ENCODE measurements at regions of chr19 and their contacts with region 1.

Region 1: DNA sequence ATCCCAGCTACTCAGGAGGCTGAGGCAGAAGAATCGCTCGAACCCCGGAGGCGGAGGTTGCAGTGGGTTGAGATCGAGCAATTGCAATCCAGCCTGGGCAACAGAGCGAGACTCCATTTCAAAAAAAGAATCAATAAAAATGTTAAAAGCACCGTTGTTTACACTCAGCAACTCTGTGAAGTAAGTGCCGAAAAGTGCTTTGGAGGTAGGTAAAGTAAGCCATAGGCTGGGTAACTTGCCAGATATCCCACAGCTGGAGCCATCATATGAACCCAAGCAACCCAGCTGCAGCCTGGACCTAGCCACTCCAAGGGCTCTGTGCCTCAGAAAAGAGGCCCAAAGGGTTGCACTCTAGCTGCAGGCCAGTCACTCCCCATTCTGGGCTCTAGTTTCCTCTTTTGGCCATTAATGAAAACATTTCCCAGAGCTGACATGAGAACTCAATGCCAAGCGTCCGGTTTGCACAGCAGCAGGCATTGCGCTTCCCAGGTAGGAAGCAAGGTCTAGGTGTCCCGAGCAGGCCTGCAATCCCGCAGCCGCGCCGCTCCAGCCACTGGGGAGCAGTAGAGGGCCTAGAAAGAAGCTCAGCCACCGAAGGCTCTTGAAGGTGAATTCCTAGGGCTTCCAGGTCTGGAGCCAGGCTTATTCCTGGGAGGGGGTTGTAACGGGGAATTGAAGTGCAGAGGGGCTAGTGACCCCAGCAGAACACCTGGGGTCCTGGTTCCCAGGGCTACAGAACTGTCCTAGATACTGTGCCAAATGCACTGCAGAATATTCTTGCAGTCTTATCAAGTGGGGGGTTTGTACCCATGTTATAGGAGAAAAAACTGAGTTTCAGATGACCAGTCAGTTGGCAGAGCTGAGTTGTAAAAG is 4.1 kb upstream of the CD79A start:
- DNase-seq: no peak
- H3K4me3 ChIP-seq: no peak overlapping the region
- H3K27ac ChIP-seq: no peak overlapping the region
- H3K4me1 ChIP-seq: peaks cover 0 to 17% (median 10%) of the 10 kb centered on the region in 4 donors
- H3K27me3 ChIP-seq: no peaks in the 10 kb centered on the region
- CTCF ChIP-seq: peak; percentile 34 to 61 (median 44)
- EP300 ChIP-seq: no peak
- POLR2A ChIP-seq: no peak

Region 2: DNA sequence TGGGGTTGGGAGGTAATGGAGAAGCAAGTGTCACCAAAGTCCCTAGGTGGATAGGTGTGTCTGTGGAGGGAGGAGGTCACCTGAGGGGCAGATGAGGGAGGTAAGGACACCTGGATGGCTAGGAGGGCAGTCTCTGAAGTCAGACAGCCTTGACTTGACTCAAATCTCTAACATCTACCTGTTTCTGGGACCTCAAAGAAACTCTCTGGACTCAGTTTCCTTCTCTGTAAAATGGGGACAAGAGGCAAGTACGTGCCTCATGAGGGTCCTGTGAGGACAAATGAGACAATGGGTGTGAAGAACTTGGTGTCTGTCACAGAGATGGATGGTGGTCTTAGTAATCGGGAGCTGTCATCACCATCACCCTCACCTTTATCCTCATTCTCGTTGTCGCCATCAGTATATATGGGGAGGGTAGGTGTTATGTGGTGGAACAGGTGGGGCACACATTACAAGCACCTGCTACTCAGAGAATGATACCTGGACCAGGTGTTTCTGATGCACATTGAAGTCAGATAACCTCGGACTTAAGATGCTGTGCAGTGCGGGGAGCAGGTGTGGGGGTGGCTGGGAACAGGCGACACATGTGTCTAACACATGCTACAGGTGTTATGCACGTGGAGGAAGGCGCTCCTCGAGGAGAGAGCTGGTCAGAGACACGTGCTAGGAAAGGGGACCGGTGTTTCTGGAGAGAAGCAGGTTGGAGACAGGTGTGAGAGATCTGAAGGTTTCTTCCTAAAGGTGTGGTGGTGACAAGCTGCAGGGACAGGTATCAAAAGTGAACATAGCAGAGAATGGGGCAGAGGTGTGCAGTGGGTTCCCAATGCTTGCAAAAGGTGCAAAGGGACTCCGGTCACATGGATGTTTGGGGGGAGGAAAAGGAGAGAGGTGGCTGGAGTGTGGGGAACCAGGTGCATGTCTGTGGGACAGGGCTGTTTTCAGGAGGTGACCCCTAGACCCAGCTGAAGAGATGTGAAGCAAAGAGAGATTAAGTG is 51.4 kb after region 1 on chr19:
- intact Hi-C with region 1: no loop called
- DNase-seq: no peak
- H3K4me3 ChIP-seq: no peak overlapping the region
- H3K27ac ChIP-seq: no peak overlapping the region
- H3K4me1 ChIP-seq: peaks cover 17 to 21% (median 20%) of the 10 kb centered on the region in 4 donors
- H3K27me3 ChIP-seq: peaks cover 5 to 100% (median 75%) of the 10 kb centered on the region in 4 donors
- CTCF ChIP-seq: no peak
- EP300 ChIP-seq: no peak
- POLR2A ChIP-seq: no peak

Region 3: DNA sequence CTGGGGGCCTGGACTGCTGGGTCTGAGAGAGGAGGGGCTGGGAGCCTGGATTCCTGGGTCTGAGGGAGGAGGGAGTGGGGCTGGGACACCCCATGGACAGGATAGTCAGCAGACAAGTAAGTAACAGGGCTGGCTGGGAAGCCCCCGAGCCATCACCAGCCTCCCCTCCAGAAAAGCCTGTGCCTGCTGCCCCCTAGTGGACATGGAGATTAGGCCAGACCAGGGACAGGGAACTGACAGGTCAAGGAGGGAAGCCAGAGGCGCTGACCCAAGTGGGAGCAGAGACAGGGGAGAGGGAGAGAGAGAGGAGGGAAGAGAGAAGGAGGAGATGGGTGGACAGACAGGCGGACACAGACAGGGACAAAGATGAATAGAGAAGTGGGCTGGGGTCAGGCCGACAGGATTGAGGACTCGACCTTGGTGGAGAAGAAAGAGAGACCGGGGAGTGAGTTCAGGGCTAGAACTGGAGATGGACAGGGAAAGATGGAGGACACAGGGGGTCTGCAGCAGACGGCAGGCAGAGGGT is 61.9 kb after region 1 on chr19:
- intact Hi-C with region 1: loop called (anchors 5 kb)
- DNase-seq: no peak
- H3K4me3 ChIP-seq: no peak overlapping the region
- H3K27ac ChIP-seq: no peak overlapping the region
- H3K4me1 ChIP-seq: peaks cover 3 to 32% (median 27%) of the 10 kb centered on the region in 4 donors
- H3K27me3 ChIP-seq: peaks cover 0 to 97% (median 60%) of the 10 kb centered on the region in 4 donors
- CTCF ChIP-seq: peak; percentile 56 to 85 (median 56)
- EP300 ChIP-seq: no peak
- POLR2A ChIP-seq: no peak

Region 4: GRCh38 chr19:41959056-41960053 is 86.3 kb after region 1 on chr19 and contains the start of gene RABAC1:
- intact Hi-C with region 1: loop called (anchors 5 kb)
- DNase-seq: peak; percentile 94
- H3K4me3 ChIP-seq: peak within 1 kb of the TSS; percentile 72 to 99 (median 83)
- H3K27ac ChIP-seq: peak within 1 kb of the TSS; percentile 87 to 94 (median 90)
- H3K4me1 ChIP-seq: peaks cover 13 to 23% (median 22%) of the 10 kb centered on the region in 4 donors
- H3K27me3 ChIP-seq: no peaks in the 10 kb centered on the region
- CTCF ChIP-seq: peak in 1 of 3 experiments; percentile 14
- EP300 ChIP-seq: no peak
- POLR2A ChIP-seq: no peak
- total RNA-seq, gene RABAC1: 142 to 250 (median 201) TPM